Calu3 (cell line): ENCODE measurements at regions of chr1 and their contacts with region 1.

Region 1: DNA sequence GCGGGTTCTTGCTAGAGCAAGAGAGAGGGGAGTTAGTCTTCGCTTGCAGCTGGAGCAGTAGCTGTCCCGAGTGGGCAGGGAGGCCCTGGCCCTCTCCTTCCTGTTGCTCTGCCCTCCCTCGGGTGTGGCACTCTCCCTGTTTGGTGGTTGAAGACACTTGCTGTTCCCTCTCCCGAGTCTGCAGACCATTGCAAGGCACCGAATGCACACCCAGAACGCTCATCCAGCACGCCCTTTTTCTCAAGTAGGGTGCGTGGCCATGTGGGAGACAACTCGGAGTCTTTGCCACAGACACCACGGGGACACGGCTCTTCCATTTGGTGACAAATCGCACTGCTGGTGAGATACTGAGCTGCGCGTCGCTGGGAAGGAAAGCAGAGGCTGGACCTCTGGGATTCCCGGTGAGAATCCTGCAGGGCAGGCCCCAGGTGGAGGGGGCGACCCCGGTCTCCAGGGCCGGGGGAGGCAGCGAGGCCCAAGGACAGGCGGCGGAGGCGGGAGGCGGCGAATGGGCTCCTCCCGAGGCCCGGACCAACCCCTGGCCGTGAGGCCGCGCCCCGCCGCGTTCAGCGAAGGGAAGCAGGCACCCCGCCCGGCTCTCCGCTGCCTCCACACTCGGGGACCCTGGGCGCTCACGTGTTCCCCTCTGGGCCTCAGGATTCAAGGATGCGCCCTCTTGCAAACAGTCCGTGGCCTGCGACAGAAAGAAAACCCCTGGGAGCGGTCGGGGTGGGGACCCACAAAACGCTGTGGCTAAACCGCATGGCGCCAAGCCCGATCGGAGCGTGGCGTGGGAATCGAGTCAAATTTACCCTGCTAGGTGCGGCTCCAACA is 10.4 kb upstream of the TMEM200B start:
- DNase-seq: no peak
- H3K4me3 Mint-ChIP-seq: peak overlapping the region; percentile 54
- H3K27ac Mint-ChIP-seq: no peak overlapping the region
- H3K4me1 Mint-ChIP-seq: peaks cover 9% of the 10 kb centered on the region
- H3K27me3 Mint-ChIP-seq: peaks cover 42% of the 10 kb centered on the region
- CTCF ChIP-seq: no peak

Region 2: DNA sequence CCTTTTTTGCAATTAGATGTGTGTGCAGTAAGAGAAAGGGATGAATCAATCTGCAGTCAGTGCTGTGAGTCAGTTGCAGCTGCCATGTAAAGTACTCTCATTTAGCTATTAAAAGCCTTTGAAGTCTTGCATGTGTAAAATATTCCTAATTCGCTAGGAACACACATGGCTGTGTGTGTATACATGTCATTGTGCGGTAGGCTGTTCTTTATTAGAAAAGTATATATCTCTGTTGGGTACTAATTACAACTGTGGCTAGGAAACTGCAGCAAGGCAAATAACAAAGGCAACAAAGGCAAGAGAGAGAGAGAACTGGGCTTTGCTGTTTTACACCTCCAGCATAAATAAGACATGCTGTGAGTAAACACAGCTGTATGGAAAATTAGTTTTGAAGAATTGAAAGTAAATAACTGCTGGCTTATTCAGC is 178.0 kb before region 1 on chr1:
- CTCF ChIA-PET with region 1: interaction called, 13 read pairs
- intact Hi-C with region 1: no loop called
- DNase-seq: no peak
- H3K4me3 Mint-ChIP-seq: no peak overlapping the region
- H3K27ac Mint-ChIP-seq: no peak overlapping the region
- H3K4me1 Mint-ChIP-seq: no peaks in the 10 kb centered on the region
- H3K27me3 Mint-ChIP-seq: no peaks in the 10 kb centered on the region
- CTCF ChIP-seq: no peak

Region 3: GRCh38 chr1:29090937-29091618 is 43.0 kb before region 1 on chr1:
- CTCF ChIA-PET with region 1: no interaction called
- intact Hi-C with region 1: no loop called
- DNase-seq: no peak
- H3K4me3 Mint-ChIP-seq: no peak overlapping the region
- H3K27ac Mint-ChIP-seq: no peak overlapping the region
- H3K4me1 Mint-ChIP-seq: no peaks in the 10 kb centered on the region
- H3K27me3 Mint-ChIP-seq: no peaks in the 10 kb centered on the region
- CTCF ChIP-seq: no peak